ENCODE measurements at regions of chr15 and their contacts with region 1.

Region 1: DNA sequence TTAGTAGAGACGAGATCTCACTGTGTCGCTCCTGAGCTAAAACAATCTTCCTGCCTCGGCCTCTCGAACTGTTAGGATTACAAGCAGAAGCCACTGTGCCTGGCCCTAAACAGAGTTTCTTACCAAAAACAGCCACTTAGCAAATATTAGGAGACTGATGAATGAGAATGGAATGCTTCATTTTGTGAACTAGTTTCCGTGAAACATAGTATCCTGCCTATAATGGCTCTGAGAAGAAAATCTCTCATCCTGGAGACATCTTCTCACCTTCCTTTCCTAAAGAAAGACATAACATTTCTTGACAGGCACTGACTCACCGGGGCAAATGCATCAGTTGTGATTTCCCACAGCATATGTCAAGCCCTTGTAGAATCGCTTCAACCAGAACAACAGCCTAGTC is 44.9 kb downstream of the GJD2 start:
- DNase-seq: no peak
- H3K4me3 ChIP-seq: no peak overlapping the region
- H3K27ac ChIP-seq: no peak overlapping the region
- H3K4me1 ChIP-seq: no peaks in the 10 kb centered on the region
- H3K27me3 ChIP-seq: peaks cover 0 to 49% (median 0%) of the 10 kb centered on the region in 4 donors
- CTCF ChIP-seq: no peak
- POLR2A ChIP-seq: no peak

Region 2: GRCh38 chr15:34603134-34603533 is 106.7 kb before region 1 on chr15:
- intact Hi-C with region 1: no loop called
- DNase-seq: no peak
- H3K4me3 ChIP-seq: no peak overlapping the region
- H3K27ac ChIP-seq: no peak overlapping the region
- H3K4me1 ChIP-seq: no peaks in the 10 kb centered on the region
- H3K27me3 ChIP-seq: peaks cover 0 to 19% (median 0%) of the 10 kb centered on the region in 4 donors
- CTCF ChIP-seq: no peak
- POLR2A ChIP-seq: no peak

Region 3: GRCh38 chr15:34773917-34774316 is 64.1 kb after region 1 on chr15:
- intact Hi-C with region 1: no loop called
- DNase-seq: no peak
- H3K4me3 ChIP-seq: no peak overlapping the region
- H3K27ac ChIP-seq: no peak overlapping the region
- H3K4me1 ChIP-seq: no peaks in the 10 kb centered on the region
- H3K27me3 ChIP-seq: peaks cover 0 to 7% (median 0%) of the 10 kb centered on the region in 4 donors
- CTCF ChIP-seq: no peak
- POLR2A ChIP-seq: no peak

Region 4: GRCh38 chr15:34914317-34914716 is 204.5 kb after region 1 on chr15:
- intact Hi-C with region 1: loop called (anchors 5 kb)
- DNase-seq: no peak
- H3K4me3 ChIP-seq: no peak overlapping the region
- H3K27ac ChIP-seq: no peak overlapping the region
- H3K4me1 ChIP-seq: no peaks in the 10 kb centered on the region
- H3K27me3 ChIP-seq: no peaks in the 10 kb centered on the region
- CTCF ChIP-seq: no peak
- POLR2A ChIP-seq: no peak